CD14-positive monocyte (primary cell): ENCODE measurements at regions of chr3 and their contacts with region 1.

Region 1: DNA sequence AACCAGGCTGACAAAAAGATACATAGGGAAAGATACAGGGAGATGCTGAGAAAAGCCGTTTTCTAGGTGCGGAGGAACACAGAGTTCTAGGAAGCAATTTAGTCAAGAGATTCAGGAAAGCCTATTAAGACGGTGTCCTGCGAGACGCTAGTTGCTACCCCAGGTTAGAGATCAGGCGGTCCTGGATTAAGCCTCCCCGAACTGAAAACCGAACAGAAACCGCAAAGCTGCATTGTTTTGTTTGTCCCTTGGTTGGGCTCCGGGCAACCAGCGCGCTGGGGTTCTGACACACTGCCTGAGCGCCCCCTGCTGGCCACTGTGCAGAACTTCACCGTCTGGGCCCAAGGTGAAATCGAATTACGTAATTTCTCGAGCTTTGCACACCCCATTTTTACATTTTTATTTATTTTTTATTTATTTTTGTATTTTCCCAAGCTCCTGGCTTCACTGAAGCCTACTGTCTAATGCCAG is 37.3 kb upstream of the NDUFB4 start:
- DNase-seq: peak; percentile 90 to 91 (median 90)
- H3K4me3 ChIP-seq: peak overlapping the region; percentile 51 to 84 (median 58)
- H3K4me3 Mint-ChIP-seq: peak overlapping the region; percentile 86 to 92
- H3K27ac ChIP-seq: peak overlapping the region in 1 of 2 donors; percentile 77
- H3K27ac Mint-ChIP-seq: peak overlapping the region; percentile 10 to 93 (median 80)
- H3K4me1 ChIP-seq: peaks cover 16 to 17% of the 10 kb centered on the region in 2 donors
- H3K4me1 Mint-ChIP-seq: peaks cover 22% of the 10 kb centered on the region
- H3K27me3 ChIP-seq: no peaks in the 10 kb centered on the region
- H3K27me3 Mint-ChIP-seq: peaks cover 0 to 5% (median 2%) of the 10 kb centered on the region in 3 donors
- CTCF ChIP-seq: peak; percentile 98

Region 2: GRCh38 chr3:119891944-119892721 is 666.7 kb before region 1 on chr3:
- intact Hi-C with region 1: loop called in 1 of 2 experiments (anchors 5 kb)
- DNase-seq: peak; percentile 29 to 52 (median 31)
- H3K4me3 ChIP-seq: no peak overlapping the region
- H3K4me3 Mint-ChIP-seq: no peak overlapping the region
- H3K27ac ChIP-seq: no peak overlapping the region
- H3K27ac Mint-ChIP-seq: no peak overlapping the region
- H3K4me1 ChIP-seq: no peaks in the 10 kb centered on the region
- H3K4me1 Mint-ChIP-seq: peaks cover 14% of the 10 kb centered on the region
- H3K27me3 ChIP-seq: no peaks in the 10 kb centered on the region
- H3K27me3 Mint-ChIP-seq: no peaks in the 10 kb centered on the region
- CTCF ChIP-seq: peak; percentile 84

Region 3: GRCh38 chr3:120417272-120417911 is 141.4 kb before region 1 on chr3:
- intact Hi-C with region 1: loop called in 1 of 2 experiments (anchors 10 kb)
- DNase-seq: peak; percentile 86 to 97 (median 93)
- H3K4me3 ChIP-seq: peak overlapping the region; percentile 14 to 88 (median 70)
- H3K4me3 Mint-ChIP-seq: peak overlapping the region; percentile 77 to 89
- H3K27ac ChIP-seq: peak overlapping the region in 1 of 2 donors; percentile 12
- H3K27ac Mint-ChIP-seq: peak overlapping the region; percentile 53 to 88 (median 81)
- H3K4me1 ChIP-seq: peaks cover 23 to 31% of the 10 kb centered on the region in 2 donors
- H3K4me1 Mint-ChIP-seq: peaks cover 29% of the 10 kb centered on the region
- H3K27me3 ChIP-seq: no peaks in the 10 kb centered on the region
- H3K27me3 Mint-ChIP-seq: peaks cover 0 to 4% (median 2%) of the 10 kb centered on the region in 3 donors
- CTCF ChIP-seq: peak; percentile 86

Region 4: DNA sequence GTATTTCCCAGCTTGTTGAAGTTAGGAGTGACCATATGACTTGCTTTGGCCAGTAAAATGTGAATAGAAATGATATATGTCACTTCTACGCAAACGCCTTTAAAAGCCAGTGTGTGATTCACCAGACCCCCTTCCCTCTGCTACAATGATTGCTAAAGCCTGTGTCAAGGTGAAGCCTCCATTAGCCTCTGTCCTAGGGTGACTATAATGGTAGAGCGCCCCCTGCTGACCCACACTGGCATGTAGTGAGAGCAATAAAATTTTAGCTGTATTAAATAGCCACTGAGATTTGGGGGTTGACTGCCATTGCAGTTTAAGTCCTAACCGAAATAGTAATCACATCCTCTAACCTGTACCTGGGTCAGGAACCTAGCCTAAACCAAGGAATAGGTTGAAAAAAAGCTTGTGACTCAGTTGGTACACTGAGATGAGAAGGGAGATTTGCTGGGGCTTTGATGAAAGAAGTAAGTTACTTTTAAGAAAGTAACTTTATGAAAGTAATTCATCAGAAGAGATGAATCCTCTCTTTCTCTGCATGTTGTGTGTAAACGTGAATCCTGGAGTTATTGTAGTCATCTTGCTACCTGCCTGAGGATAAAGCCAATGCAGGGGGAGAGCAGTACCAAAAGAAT is 236.3 kb after region 1 on chr3:
- intact Hi-C with region 1: loop called (anchors 5 kb)
- DNase-seq: peak; percentile 43 to 66 (median 63)
- H3K4me3 ChIP-seq: no peak overlapping the region
- H3K4me3 Mint-ChIP-seq: no peak overlapping the region
- H3K27ac ChIP-seq: no peak overlapping the region
- H3K27ac Mint-ChIP-seq: no peak overlapping the region
- H3K4me1 ChIP-seq: no peaks in the 10 kb centered on the region
- H3K4me1 Mint-ChIP-seq: no peaks in the 10 kb centered on the region
- H3K27me3 ChIP-seq: peaks cover 0 to 2% of the 10 kb centered on the region in 2 donors
- H3K27me3 Mint-ChIP-seq: peaks cover 0 to 4% (median 4%) of the 10 kb centered on the region in 3 donors
- CTCF ChIP-seq: peak; percentile 81